Common myeloid progenitor, CD34-positive (primary cell): ENCODE measurements at regions of chr12 and their contacts with region 1.

Region 1: DNA sequence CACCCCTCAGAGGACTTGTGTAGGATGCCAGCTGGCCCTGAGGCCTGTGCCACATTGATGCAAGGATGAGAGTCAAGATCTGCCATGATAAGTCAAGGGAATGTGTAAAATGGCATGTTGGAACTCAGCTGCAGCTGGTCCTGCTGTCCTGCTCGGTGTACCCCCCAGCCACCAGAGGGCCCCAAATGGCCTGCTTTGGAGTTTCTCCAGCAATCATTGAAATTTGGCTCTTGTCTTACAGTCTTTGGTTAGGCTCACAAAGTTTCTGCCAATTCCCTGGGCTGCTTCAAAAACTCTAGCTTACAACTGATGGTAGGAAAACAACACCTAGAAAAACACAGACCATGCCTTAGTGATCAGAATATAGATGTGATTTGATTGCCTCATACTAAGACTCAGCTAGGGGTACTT is 76.8 kb downstream of the HSD17B6 start:
- DNase-seq: peak; percentile 67 to 78 (median 74)
- H3K4me3 ChIP-seq: no peak overlapping the region
- H3K27ac ChIP-seq: no peak overlapping the region
- H3K4me1 ChIP-seq: peaks cover 0 to 7% (median 0%) of the 10 kb centered on the region in 4 experiments
- H3K27me3 ChIP-seq: peaks cover 0 to 7% (median 0%) of the 10 kb centered on the region in 5 experiments

Region 2: DNA sequence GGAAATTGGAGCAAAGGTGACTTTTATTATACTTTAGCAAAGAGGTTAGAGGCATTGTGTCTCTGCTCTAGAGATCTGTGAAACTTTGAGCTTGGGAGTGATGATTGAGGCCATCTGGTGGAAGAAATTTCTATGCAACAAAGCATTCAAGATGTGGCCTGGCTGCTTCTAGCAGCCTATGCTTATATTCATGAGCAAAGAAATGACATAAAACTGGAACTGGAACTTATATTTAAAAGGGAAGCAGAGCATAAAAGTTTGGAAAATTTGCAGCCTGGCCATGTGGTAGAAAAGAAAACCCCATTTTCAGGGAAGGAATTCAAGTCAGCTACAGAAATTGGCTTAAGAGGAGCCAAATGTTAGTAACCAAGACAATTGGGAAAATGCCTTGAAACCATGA is 23.9 kb after region 1 on chr12:
- CTCF ChIA-PET with region 1: no interaction called
- POLR2A ChIA-PET with region 1: no interaction called
- DNase-seq: peak in 1 of 3 donors; percentile 24
- H3K4me3 ChIP-seq: no peak overlapping the region
- H3K27ac ChIP-seq: no peak overlapping the region
- H3K4me1 ChIP-seq: no peaks in the 10 kb centered on the region
- H3K27me3 ChIP-seq: no peaks in the 10 kb centered on the region

Region 3: DNA sequence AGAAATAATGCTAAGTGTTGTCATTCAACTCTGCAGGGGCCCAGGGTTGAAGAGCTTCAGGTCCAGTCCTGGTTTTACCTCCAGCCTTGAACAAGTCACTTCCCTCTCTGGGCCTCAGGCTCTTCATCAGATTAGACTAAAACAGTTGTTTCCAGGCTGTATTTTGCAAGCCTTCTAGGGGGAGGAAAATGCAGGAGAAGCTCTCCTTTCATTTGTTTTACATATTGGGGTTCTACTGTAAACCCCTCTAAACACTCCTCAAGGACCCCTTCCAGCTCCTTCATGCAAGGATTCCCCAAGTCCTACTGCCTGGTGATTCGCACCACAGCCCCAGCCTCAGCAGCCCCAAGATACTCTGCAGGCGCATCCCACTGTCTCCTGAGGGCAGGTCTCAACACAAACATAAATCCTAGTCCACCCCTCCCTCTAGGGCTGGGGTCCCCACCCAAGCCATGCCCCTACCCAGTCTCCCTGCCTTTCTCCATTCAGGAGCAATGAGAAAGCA is 91.6 kb after region 1 on chr12:
- CTCF ChIA-PET with region 1: no interaction called
- POLR2A ChIA-PET with region 1: no interaction called
- DNase-seq: peak; percentile 85 to 94 (median 94)
- H3K4me3 ChIP-seq: peak overlapping the region in 5 of 7 experiments; percentile 8 to 57 (median 44)
- H3K27ac ChIP-seq: peak overlapping the region in 1 of 2 experiments; percentile 78
- H3K4me1 ChIP-seq: peaks cover 11 to 52% (median 32%) of the 10 kb centered on the region in 4 experiments
- H3K27me3 ChIP-seq: no peaks in the 10 kb centered on the region

Region 4: GRCh38 chr12:56987551-56988053 is 147.7 kb after region 1 on chr12:
- CTCF ChIA-PET with region 1: interaction called, 21 read pairs
- POLR2A ChIA-PET with region 1: interaction called, 3 read pairs
- DNase-seq: peak; percentile 61 to 69 (median 68)
- H3K4me3 ChIP-seq: peak overlapping the region in 3 of 7 experiments; percentile 14 to 54 (median 20)
- H3K27ac ChIP-seq: no peak overlapping the region
- H3K4me1 ChIP-seq: peaks cover 5 to 55% (median 40%) of the 10 kb centered on the region in 4 experiments
- H3K27me3 ChIP-seq: no peaks in the 10 kb centered on the region

Region 5: DNA sequence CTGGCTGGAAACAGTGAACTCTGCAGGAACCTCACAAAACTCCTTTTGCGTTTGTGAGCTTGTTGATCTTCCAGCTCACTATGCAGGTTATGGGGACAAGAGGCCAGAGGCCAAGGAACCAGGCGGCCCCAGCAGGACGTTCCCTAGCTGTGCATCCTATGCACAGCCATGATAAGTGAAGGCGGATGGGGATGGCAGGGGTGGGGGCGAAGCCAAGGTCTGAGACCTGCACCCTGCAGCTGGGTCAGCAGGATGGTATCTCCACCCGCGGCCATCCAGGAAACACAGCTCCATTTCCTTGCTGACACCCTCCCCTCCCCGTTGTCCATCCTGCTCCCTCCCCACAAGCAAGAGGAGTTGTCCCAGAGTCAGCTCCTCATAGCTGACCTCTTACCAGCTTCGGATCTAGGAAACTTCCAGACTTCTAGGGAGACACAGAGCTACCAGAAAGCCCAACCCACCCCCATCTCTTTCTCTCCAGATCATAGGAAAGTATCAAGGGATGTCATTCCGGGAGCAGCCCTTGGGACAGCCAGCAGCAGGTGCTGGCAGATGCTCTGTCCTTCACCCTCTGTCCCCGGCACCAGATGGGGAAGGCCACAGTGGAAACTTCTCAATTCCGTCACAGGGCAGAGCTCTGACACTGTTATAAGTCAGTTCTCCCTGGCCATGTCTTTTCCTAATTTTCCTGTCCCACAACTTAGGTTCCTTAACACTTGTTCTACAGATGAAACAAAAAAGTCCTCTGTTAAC is 157.0 kb after region 1 on chr12:
- CTCF ChIA-PET with region 1: interaction called, 67 read pairs
- POLR2A ChIA-PET with region 1: no interaction called
- DNase-seq: no peak
- H3K4me3 ChIP-seq: no peak overlapping the region
- H3K27ac ChIP-seq: no peak overlapping the region
- H3K4me1 ChIP-seq: peaks cover 0 to 11% (median 6%) of the 10 kb centered on the region in 4 experiments
- H3K27me3 ChIP-seq: no peaks in the 10 kb centered on the region